ENCODE measurements at regions of chr6 and their contacts with region 1.

Region 1: GRCh38 chr6:35731736-35732532 is 4.9 kb upstream of the ARMC12 start:
- DNase-seq: peak; percentile 97
- ATAC-seq: peak; percentile 67
- H3K4me3 Mint-ChIP-seq: peak overlapping the region; percentile 84
- H3K27ac Mint-ChIP-seq: peak overlapping the region; percentile 96
- H3K4me1 Mint-ChIP-seq: peaks cover 66% of the 10 kb centered on the region
- H3K27me3 Mint-ChIP-seq: no peaks in the 10 kb centered on the region

Region 2: DNA sequence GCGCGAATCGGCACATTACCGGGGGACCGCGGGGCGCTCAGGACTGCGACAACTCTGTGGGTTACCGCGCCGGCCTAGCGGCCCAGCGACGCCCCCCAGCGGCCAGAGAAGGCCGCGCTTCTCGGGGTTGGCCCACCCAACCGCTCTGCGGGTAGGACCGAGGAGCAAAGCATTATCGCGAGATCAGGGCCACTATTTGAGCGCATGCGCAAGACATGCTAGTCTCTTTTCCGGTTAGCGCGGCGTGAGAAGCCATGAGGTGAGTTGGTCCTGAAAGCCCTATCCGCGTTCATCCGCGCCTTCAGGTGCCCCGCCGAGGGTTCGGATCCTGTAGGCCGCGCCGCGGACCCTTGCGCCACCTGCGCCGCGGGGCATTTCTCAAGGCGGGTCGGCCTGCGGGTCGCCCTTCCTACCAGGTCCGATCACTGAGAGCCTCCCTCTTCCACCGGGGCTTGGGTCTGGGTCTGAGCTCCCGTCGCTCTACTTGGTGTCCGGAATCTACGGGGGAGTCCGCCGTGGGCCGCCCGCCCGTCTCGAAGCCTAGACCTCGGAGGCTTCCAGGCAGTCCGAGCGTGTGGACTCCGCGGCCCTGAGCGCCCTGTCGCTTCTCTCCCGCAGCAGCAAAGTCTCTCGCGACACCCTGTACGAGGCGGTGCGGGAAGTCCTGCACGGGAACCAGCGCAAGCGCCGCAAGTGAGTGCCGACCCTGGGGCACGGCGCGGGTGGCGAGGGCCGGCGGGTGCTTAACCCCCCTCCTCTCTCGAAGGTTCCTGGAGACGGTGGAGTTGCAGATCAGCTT is 263.6 kb before region 1 on chr6 and contains the start of gene RPL10A:
- CTCF ChIA-PET with region 1: interaction called, 10 read pairs
- DNase-seq: peak; percentile 98
- ATAC-seq: peak; percentile 87
- H3K4me3 Mint-ChIP-seq: peak within 1 kb of the TSS; percentile 99
- H3K27ac Mint-ChIP-seq: peak within 1 kb of the TSS; percentile 97
- H3K4me1 Mint-ChIP-seq: peaks cover 43% of the 10 kb centered on the region
- H3K27me3 Mint-ChIP-seq: no peaks in the 10 kb centered on the region
- total RNA-seq, gene RPL10A: 1,163 to 1,382 TPM

Region 3: DNA sequence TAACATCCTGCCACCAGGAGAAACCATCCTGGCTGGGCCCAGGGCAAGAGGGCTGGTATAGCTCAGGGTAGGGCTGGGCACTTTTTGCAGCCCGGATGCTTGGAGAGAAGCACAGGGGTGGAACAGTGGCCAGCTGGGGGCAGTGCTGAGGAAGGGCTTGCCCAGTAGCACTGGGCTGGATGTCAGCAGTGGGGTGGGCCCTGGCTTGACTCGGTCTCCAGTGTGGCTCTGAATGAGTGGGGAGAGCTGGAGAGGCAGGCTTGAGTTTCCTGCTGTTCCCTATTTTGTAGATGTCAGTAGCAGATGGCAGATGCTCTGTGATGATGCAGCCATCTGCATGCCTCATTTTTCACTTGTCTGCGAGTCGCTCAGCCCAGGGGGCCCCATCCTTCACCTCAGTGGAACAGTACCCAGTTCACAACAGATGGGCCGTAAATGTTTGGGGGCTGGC is 162.9 kb before region 1 on chr6:
- CTCF ChIA-PET with region 1: interaction called, 180 read pairs
- DNase-seq: peak; percentile 57
- ATAC-seq: peak; percentile 75
- H3K4me3 Mint-ChIP-seq: no peak overlapping the region
- H3K27ac Mint-ChIP-seq: no peak overlapping the region
- H3K4me1 Mint-ChIP-seq: no peaks in the 10 kb centered on the region
- H3K27me3 Mint-ChIP-seq: peaks cover 22% of the 10 kb centered on the region

Region 4: DNA sequence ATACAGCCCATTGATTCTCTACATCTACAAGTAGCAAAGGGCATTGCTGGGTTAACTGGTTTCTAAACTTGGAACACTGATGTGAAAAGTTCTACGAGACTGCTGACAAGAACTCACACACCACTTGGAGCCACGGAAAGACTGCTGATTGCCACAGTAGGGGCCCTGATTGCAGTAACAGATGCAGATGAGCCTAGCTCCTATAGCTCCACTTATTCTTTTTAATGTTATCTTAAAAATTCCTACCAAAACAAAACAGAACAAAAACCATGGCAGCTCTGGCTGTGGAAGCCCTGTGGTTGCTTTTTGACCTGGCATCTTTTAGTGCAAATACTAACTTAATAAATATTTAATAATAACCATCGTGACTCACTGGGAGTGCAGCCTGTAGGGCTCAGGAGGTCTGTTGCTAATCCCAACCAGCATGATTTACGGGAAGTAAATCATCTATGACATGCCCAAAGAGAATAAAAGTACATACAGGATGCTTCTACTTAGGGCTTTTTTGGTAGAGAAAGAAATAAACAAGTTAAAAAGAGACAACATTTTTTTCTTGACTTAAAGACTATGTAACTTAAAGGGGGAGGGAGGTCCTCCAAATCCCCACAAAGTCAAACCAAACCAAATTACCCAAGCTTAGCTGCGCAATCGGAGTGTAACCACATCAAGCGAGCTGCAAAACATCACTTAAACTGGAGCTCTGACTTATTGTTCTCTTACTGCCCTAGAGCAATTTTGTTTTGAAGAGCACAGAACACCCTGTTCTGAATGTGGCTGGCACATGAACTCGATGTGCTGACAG is 130.4 kb before region 1 on chr6:
- CTCF ChIA-PET with region 1: interaction called, 46 read pairs
- DNase-seq: peak; percentile 67
- ATAC-seq: peak; percentile 76
- H3K4me3 Mint-ChIP-seq: peak overlapping the region; percentile 62
- H3K27ac Mint-ChIP-seq: peak overlapping the region; percentile 80
- H3K4me1 Mint-ChIP-seq: peaks cover 47% of the 10 kb centered on the region
- H3K27me3 Mint-ChIP-seq: no peaks in the 10 kb centered on the region

Region 5: DNA sequence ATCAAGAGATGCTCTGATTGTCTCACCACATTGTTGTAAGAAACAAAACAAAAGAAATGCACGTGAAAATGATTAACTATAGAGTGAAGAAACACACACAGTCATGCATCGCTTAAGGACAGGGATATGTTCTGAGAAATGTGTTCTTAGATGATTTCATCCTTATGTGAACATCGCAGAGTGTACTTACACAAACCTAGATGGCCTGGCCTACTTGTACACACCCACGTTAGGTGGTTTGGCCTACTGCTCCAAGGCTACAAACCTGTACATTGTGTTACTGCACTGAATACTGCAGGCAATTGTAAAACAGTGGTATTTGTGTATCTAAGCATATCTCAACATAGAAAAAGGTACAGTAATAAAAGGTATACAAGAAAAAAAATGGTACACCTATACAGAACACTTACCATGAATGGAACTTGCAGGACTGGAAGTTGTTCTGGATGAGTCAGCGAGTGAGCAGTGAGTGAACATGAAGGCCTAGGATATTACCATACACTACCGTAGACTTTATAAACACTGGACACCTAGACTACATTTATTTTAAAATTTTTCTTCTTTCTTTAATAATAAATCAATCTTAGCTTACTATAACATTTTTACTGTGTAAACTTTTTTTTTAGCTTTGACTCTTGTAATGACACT is 91.8 kb before region 1 on chr6:
- CTCF ChIA-PET with region 1: interaction called, 21 read pairs
- DNase-seq: no peak
- ATAC-seq: no peak
- H3K4me3 Mint-ChIP-seq: no peak overlapping the region
- H3K27ac Mint-ChIP-seq: no peak overlapping the region
- H3K4me1 Mint-ChIP-seq: peaks cover 33% of the 10 kb centered on the region
- H3K27me3 Mint-ChIP-seq: no peaks in the 10 kb centered on the region

Region 6: GRCh38 chr6:35719830-35720733 is 11.9 kb before region 1 on chr6:
- CTCF ChIA-PET with region 1: interaction called, 51 read pairs
- DNase-seq: peak; percentile 35
- ATAC-seq: peak; percentile 38
- H3K4me3 Mint-ChIP-seq: no peak overlapping the region
- H3K27ac Mint-ChIP-seq: peak overlapping the region; percentile 64
- H3K4me1 Mint-ChIP-seq: peaks cover 34% of the 10 kb centered on the region
- H3K27me3 Mint-ChIP-seq: no peaks in the 10 kb centered on the region

Measured in activated CD8-positive, alpha-beta memory T cell treated with anti-CD3 and anti-CD28 coated beads, Interleukin-2, amount 10 ng/mL, durations not matched to agents 7 days and 5 days (primary cell).